OCI-LY7 (cell line): ENCODE measurements at regions of chrX and their contacts with region 1.

Region 1: GRCh38 chrX:23952984-23953907 is 45.4 kb downstream of the CXorf58 start:
- DNase-seq: peak; percentile 61
- H3K4me3 ChIP-seq: peak overlapping the region; percentile 53
- H3K27ac ChIP-seq: peak overlapping the region; percentile 63
- H3K4me1 ChIP-seq: peaks cover 18% of the 10 kb centered on the region
- CTCF ChIP-seq: no peak

Region 2: DNA sequence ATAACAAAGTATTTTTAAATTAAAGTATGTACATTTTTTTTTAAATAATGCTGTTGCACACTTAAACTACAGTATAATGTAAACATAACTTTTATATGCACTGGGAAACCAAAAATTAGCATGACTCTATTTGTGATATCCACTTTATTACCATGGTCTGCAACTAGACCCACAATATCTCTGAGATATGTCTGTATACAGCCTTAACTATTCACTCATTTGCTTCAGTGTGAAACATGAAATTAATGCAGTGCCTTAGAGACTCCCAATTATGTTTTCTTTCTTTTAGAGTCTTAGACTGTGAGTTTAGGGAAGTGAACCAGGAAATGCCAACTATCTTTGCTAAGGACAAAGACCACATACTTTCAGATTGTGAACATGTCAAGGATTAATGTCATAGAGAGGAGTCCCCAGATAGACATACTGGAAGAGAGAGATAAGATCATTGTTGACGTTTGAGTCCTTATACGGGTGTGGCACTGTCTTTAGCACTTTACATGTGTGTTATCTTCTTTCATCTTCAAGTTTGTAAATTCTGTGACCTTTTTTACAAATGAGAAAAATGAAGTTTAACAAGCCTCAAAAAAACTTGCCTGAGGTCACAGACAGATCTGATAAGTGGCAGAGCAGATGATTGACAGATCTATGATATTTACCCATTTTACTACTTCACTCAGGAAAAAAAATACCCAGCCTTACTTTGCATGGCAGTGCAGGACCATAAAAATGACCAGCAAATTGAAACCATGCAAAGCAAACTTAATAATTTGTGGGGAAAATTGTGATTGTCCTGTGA is 22.2 kb before region 1 on chrX:
- CTCF ChIA-PET with region 1: no interaction called
- POLR2A ChIA-PET with region 1: interaction called, 10 read pairs
- intact Hi-C with region 1: no loop called
- DNase-seq: no peak
- H3K4me3 ChIP-seq: no peak overlapping the region
- H3K27ac ChIP-seq: no peak overlapping the region
- H3K4me1 ChIP-seq: peaks cover 8% of the 10 kb centered on the region
- CTCF ChIP-seq: no peak

Region 3: DNA sequence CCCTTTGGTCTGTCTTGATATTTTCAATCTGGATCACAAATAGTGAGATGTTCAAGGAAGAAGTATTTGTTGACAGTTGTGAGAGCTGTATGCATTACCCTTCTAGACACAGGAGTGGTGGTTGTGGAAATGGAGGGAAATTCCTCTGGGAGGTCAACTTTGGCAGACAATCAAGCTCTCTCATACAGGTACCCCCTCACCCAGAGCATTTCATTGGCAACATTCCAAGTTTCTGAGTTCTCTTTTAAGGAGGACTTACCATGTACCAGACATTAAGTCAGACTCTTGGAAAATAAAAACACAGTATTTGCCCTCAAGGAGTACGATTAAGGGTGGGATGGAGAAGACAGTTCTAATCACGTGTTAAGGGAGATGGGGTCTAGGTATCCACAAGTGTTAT is 28.5 kb after region 1 on chrX:
- CTCF ChIA-PET with region 1: no interaction called
- POLR2A ChIA-PET with region 1: no interaction called
- intact Hi-C with region 1: no loop called
- DNase-seq: no peak
- H3K4me3 ChIP-seq: no peak overlapping the region
- H3K27ac ChIP-seq: no peak overlapping the region
- H3K4me1 ChIP-seq: no peaks in the 10 kb centered on the region
- CTCF ChIP-seq: no peak

Region 4: GRCh38 chrX:24219320-24219719 is 266.1 kb after region 1 on chrX:
- CTCF ChIA-PET with region 1: no interaction called
- POLR2A ChIA-PET with region 1: no interaction called
- intact Hi-C with region 1: no loop called
- DNase-seq: no peak
- H3K4me3 ChIP-seq: no peak overlapping the region
- H3K27ac ChIP-seq: no peak overlapping the region
- H3K4me1 ChIP-seq: no peaks in the 10 kb centered on the region
- CTCF ChIP-seq: no peak